ENCODE measurements at regions of chr4 and their contacts with region 1.

Region 1: DNA sequence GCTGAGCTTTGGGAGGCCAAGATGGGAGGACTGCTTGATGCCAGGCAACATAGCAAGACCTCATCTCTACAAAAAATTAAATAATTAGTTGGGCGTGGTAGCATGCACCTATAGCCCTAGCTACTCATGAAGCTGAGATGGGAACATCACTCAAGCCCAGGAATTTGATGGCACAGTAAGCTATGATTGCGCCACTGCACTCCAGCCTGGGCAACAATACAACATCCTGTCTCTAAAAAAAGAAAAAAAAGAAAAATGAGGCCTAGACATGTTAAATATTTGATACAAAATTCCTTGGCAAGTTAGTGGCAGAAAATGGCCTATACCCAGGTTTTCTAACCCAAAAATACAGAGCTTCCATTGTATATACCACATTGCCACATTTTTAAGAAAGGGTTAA is 88.1 kb upstream of the MAB21L2 start:
- DNase-seq: no peak
- ATAC-seq: no peak
- H3K4me3 ChIP-seq: no peak overlapping the region
- H3K27ac ChIP-seq: no peak overlapping the region
- H3K4me1 ChIP-seq: no peaks in the 10 kb centered on the region
- H3K27me3 ChIP-seq: no peaks in the 10 kb centered on the region
- CTCF ChIP-seq: no peak
- EP300 ChIP-seq: no peak
- POLR2A ChIP-seq: no peak
- RAD21 ChIP-seq: no peak

Region 2: DNA sequence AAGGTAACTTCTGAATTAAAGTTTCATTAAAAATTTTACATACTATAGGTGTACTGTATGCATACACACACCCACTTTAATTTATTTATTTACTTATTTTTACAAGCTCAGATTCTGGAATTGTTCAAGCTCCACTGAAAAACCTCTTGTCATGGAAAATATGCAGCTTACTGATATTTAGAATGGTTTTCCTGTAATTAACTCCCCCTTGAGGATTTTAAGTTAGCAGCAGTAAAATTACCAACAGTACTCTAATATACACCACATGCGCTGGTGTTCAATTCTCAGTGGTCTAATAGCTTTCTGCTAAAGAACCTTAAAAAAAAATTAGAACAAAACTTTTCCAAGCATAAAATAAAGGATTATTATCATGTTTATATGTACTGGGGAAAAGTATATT is 100.1 kb after region 1 on chr4:
- CTCF ChIA-PET with region 1: no interaction called
- POLR2A ChIA-PET with region 1: no interaction called
- in situ Hi-C with region 1: no loop called
- intact Hi-C with region 1: loop called (anchors 5 kb)
- DNase-seq: peak in 1 of 4 experiments; percentile 34
- ATAC-seq: peak; percentile 80
- H3K4me3 ChIP-seq: no peak overlapping the region
- H3K27ac ChIP-seq: no peak overlapping the region
- H3K4me1 ChIP-seq: no peaks in the 10 kb centered on the region
- H3K27me3 ChIP-seq: no peaks in the 10 kb centered on the region
- CTCF ChIP-seq: peak in 2 of 3 experiments; percentile 23 to 53; a peak in 2 of 6 replicates
- EP300 ChIP-seq: no peak
- POLR2A ChIP-seq: no peak
- RAD21 ChIP-seq: peak; percentile 51 to 63

Region 3: DNA sequence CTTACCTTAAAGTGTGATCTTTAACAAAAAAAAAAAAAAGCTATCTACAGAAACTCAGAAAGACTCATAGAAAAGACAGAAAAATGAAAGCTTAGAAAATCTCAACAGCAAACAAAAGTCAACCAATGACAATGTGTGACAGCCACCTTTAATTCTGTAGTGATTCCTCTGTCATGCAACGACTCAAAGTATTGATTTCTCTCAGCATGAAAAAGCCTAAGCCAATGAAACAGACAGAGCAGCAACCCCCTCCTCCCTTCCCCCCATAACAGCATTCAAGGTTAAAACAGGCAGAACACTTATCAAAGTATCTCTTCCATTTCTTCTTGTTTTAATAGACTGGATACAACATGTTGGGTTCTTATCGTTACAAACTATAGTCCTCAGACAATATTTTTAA is 200.6 kb after region 1 on chr4:
- CTCF ChIA-PET with region 1: no interaction called
- POLR2A ChIA-PET with region 1: no interaction called
- in situ Hi-C with region 1: no loop called
- intact Hi-C with region 1: no loop called
- DNase-seq: no peak
- ATAC-seq: no peak
- H3K4me3 ChIP-seq: no peak overlapping the region
- H3K27ac ChIP-seq: no peak overlapping the region
- H3K4me1 ChIP-seq: no peaks in the 10 kb centered on the region
- H3K27me3 ChIP-seq: no peaks in the 10 kb centered on the region
- CTCF ChIP-seq: no peak
- EP300 ChIP-seq: no peak
- POLR2A ChIP-seq: no peak
- RAD21 ChIP-seq: no peak

Measured in K562 (cell line).